Aorta (tissue), 5 donors: ENCODE measurements at regions of chr12 and their contacts with region 1.

Region 1: GRCh38 chr12:108099073-108099472 is 30.0 kb upstream of the WSCD2 start:
- DNase-seq: no peak
- ATAC-seq: no peak
- H3K4me3 ChIP-seq: no peak overlapping the region
- H3K27ac ChIP-seq: no peak overlapping the region
- H3K4me1 ChIP-seq: no peaks in the 10 kb centered on the region
- H3K27me3 ChIP-seq: peaks cover 0 to 2% of the 10 kb centered on the region in 2 donors

Region 2: GRCh38 chr12:107992870-107993451 is 106.1 kb before region 1 on chr12:
- intact Hi-C with region 1: loop called in 1 of 2 experiments (anchors 5 kb)
- DNase-seq: no peak
- ATAC-seq: no peak
- H3K4me3 ChIP-seq: no peak overlapping the region
- H3K27ac ChIP-seq: no peak overlapping the region
- H3K4me1 ChIP-seq: no peaks in the 10 kb centered on the region
- H3K27me3 ChIP-seq: no peaks in the 10 kb centered on the region

Region 3: GRCh38 chr12:108080363-108080762 is 18.7 kb before region 1 on chr12:
- intact Hi-C with region 1: no loop called
- DNase-seq: no peak
- ATAC-seq: no peak
- H3K4me3 ChIP-seq: no peak overlapping the region
- H3K27ac ChIP-seq: no peak overlapping the region
- H3K4me1 ChIP-seq: no peaks in the 10 kb centered on the region
- H3K27me3 ChIP-seq: no peaks in the 10 kb centered on the region

Region 4: DNA sequence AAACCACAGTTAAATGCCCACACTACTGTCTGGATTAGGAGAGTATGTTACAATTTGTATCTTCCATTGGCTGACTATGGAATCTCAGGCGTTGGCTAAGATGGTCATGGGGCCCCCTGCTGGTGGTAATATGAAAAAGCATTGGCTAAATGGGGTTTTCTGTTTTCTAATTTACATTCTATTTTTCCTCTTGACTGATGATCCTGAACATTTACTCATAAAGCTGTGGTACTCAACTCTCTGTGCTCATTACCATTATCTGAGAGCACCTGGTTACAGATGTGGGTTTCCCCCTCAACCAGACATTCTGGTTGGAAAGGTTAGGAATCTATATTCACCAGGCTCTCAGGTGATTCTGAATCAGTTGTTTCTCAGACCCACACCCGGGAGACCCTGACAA is 94.8 kb after region 1 on chr12:
- intact Hi-C with region 1: loop called (anchors 1 to 2 kb)
- DNase-seq: no peak
- ATAC-seq: no peak
- H3K4me3 ChIP-seq: no peak overlapping the region
- H3K27ac ChIP-seq: no peak overlapping the region
- H3K4me1 ChIP-seq: no peaks in the 10 kb centered on the region
- H3K27me3 ChIP-seq: no peaks in the 10 kb centered on the region